ENCODE measurements at regions of chr2 and their contacts with region 1.

Region 1: GRCh38 chr2:191128172-191128910 is 22.5 kb downstream of the STAT4 start:
- DNase-seq: no peak
- ATAC-seq: no peak
- H3K4me3 ChIP-seq: no peak overlapping the region
- H3K27ac ChIP-seq: no peak overlapping the region
- H3K4me1 ChIP-seq: no peaks in the 10 kb centered on the region
- H3K27me3 ChIP-seq: no peaks in the 10 kb centered on the region; the same call in 1 of the 2 replicates
- CTCF ChIP-seq: no peak
- POLR2A ChIP-seq: no peak
- RAD21 ChIP-seq: no peak

Region 2: DNA sequence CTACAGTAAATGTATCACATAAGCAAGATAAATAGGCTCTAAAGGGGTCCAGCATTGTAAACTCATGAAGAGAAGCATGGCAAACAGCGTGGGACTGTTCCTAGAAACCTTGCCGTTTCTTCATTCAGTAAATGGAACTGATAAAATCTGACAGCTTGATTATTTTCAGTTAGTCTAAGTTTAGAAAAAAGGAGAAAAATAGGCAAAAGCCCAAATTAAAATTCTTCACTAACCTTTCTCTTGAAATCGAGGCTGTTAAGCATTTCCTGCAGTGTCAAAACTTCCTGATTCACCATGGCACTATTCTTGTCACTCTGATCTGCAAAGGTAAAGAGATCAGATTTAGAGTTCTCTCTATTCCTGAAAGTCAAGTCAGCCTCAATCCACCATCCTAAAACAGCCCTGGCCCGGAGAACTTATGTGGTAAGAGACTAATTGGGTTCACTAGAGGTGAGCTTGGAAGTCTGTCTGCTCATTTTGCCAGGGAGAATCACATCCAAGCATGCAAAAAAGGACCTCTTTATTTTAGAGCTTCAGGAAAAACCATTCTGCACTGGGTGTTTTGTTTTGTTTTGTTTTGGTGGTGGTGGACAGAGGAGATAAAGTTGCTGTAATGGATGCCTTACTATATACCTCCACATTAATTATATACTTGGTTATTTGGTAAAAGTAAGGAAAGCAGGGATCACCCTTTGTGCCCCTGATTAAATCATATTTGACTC is 62.0 kb before region 1 on chr2:
- CTCF ChIA-PET with region 1: no interaction called
- POLR2A ChIA-PET with region 1: no interaction called
- dilution Hi-C with region 1: no loop called
- in situ Hi-C with region 1: loop called (anchors 10 kb)
- intact Hi-C with region 1: no loop called
- DNase-seq: no peak
- ATAC-seq: no peak
- H3K4me3 ChIP-seq: no peak overlapping the region
- H3K27ac ChIP-seq: no peak overlapping the region
- H3K4me1 ChIP-seq: 0 out of 2 replicates have a peak, but pooled peaks cover 2% of the 10 kb centered on the region
- H3K27me3 ChIP-seq: no peaks in the 10 kb centered on the region
- CTCF ChIP-seq: no peak
- POLR2A ChIP-seq: no peak
- RAD21 ChIP-seq: no peak

Region 3: GRCh38 chr2:191086706-191087105 is 41.6 kb before region 1 on chr2:
- CTCF ChIA-PET with region 1: no interaction called
- POLR2A ChIA-PET with region 1: no interaction called
- dilution Hi-C with region 1: no loop called
- in situ Hi-C with region 1: no loop called
- intact Hi-C with region 1: loop called (anchors 5 kb)
- DNase-seq: no peak
- ATAC-seq: no peak
- H3K4me3 ChIP-seq: no peak overlapping the region
- H3K27ac ChIP-seq: no peak overlapping the region
- H3K4me1 ChIP-seq: no peaks in the 10 kb centered on the region
- H3K27me3 ChIP-seq: no peaks in the 10 kb centered on the region
- CTCF ChIP-seq: no peak
- POLR2A ChIP-seq: no peak
- RAD21 ChIP-seq: no peak

Measured in IMR-90 (cell line).